CD8-positive, alpha-beta memory T cell (primary cell): ENCODE measurements at regions of chr17 and their contacts with region 1.

Region 1: GRCh38 chr17:40559954-40560591 is 5.2 kb downstream of the CCR7 start:
- DNase-seq: peak; percentile 75 to 85 (median 79)
- H3K4me3 ChIP-seq: peak overlapping the region; percentile 99
- H3K4me3 Mint-ChIP-seq: peak overlapping the region; percentile 88 to 91 (median 90)
- H3K27ac ChIP-seq: peak overlapping the region; percentile 96
- H3K27ac Mint-ChIP-seq: peak overlapping the region; percentile 92 to 100 (median 98)
- H3K4me1 ChIP-seq: peaks cover 96% of the 10 kb centered on the region
- H3K4me1 Mint-ChIP-seq: peaks cover 74 to 96% (median 94%) of the 10 kb centered on the region in 3 donors
- H3K27me3 ChIP-seq: no peaks in the 10 kb centered on the region
- H3K27me3 Mint-ChIP-seq: peaks cover 0 to 7% of the 10 kb centered on the region in 2 donors

Region 2: GRCh38 chr17:40362696-40363110 is 197.4 kb before region 1 on chr17:
- CTCF ChIA-PET with region 1: interaction called, 13 read pairs
- POLR2A ChIA-PET with region 1: interaction called, 4 read pairs
- DNase-seq: peak; percentile 52 to 79 (median 65)
- H3K4me3 ChIP-seq: no peak overlapping the region
- H3K4me3 Mint-ChIP-seq: peak overlapping the region; percentile 33 to 81 (median 59)
- H3K27ac ChIP-seq: no peak overlapping the region
- H3K27ac Mint-ChIP-seq: no peak overlapping the region
- H3K4me1 ChIP-seq: peaks cover 11% of the 10 kb centered on the region
- H3K4me1 Mint-ChIP-seq: peaks cover 9 to 22% (median 9%) of the 10 kb centered on the region in 3 donors
- H3K27me3 ChIP-seq: no peaks in the 10 kb centered on the region
- H3K27me3 Mint-ChIP-seq: peaks cover 7 to 17% of the 10 kb centered on the region in 2 donors

Region 3: GRCh38 chr17:40443583-40444327 is 116.3 kb before region 1 on chr17:
- CTCF ChIA-PET with region 1: interaction called, 13 read pairs
- POLR2A ChIA-PET with region 1: interaction called, 6 read pairs
- DNase-seq: peak; percentile 49 to 74 (median 54)
- H3K4me3 ChIP-seq: peak overlapping the region; percentile 64
- H3K4me3 Mint-ChIP-seq: peak overlapping the region; percentile 82 to 95 (median 85)
- H3K27ac ChIP-seq: peak overlapping the region; percentile 47
- H3K27ac Mint-ChIP-seq: peak overlapping the region; percentile 84 to 98 (median 92)
- H3K4me1 ChIP-seq: peaks cover 40% of the 10 kb centered on the region
- H3K4me1 Mint-ChIP-seq: peaks cover 36 to 44% (median 38%) of the 10 kb centered on the region in 3 donors
- H3K27me3 ChIP-seq: no peaks in the 10 kb centered on the region
- H3K27me3 Mint-ChIP-seq: peaks cover 0 to 11% of the 10 kb centered on the region in 2 donors

Region 4: DNA sequence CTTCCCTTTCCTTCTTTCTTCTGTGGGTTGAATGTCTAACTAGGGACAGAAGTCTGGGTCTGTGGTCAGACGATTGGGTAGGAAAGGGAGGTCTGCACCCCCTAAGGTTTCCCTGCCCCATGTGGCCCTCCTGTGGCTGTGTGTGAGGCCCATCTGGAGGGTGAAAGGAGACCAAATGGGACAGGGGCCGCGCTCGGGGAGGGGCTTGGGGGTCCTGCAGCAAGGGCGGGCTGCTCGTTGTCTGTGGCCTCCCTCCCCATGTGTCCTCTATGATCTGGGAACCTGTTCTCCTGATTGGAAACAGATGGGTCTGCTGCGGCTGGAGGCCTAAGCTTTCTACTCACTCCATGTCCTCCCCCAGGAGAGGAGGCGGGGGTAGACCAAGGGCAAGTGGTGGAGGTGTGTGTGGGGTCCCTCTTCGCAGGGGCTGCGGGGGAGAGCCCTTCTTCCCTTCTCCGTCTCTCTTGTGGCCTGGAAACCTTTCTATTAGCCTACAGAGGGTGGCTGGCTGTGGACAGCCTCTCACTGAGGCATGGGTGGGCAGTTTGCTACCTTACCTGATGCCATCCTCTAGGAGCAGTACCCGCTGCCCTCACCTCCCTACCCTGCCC is 98.2 kb before region 1 on chr17:
- CTCF ChIA-PET with region 1: no interaction called
- POLR2A ChIA-PET with region 1: no interaction called
- DNase-seq: no peak
- H3K4me3 ChIP-seq: no peak overlapping the region
- H3K4me3 Mint-ChIP-seq: no peak overlapping the region
- H3K27ac ChIP-seq: no peak overlapping the region
- H3K27ac Mint-ChIP-seq: peak overlapping the region in 1 of 8 donors; percentile 68
- H3K4me1 ChIP-seq: no peaks in the 10 kb centered on the region
- H3K4me1 Mint-ChIP-seq: peaks cover 0 to 2% (median 0%) of the 10 kb centered on the region in 3 donors
- H3K27me3 ChIP-seq: no peaks in the 10 kb centered on the region
- H3K27me3 Mint-ChIP-seq: peaks cover 0 to 2% of the 10 kb centered on the region in 2 donors

Region 5: DNA sequence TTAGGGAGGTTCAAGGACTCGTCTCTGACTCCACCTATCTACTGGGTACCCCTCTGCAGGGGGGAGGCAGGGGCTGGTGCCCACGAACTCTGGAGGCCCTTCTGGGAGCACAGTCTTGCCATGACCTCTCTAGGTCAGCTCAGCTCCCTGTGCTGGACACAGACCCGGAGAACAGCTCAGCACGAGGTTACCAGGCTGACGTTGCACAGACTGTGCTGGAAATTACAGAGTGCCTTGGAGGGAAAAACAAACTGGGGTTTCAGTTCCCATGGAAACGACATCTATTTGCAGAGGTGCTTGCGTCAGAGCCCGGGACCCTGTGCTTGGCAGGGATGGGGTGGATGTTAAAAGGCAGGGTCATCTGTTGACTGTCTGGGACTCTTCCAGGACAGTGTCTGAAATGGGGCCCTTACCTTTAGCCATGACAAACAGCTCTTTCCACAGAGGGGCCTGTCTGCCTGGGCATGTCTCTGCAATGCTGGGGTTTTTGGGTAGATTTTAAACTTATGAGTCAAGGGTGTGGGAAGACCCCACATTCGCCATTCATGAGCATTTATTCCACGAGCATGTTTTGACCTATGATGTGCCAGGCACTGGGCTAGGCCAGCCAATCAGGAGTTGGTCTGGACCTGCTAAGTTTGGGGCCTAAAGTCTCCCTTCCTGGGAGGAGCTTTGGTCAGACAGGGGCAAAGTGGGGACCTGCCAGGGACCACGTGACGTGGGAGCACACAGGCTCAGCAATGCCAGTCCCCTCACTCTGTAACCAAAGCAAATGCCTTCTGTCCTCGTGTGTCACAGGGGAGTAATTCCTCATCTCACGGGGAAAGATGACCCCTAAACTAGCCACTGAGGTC is 17.3 kb before region 1 on chr17:
- CTCF ChIA-PET with region 1: interaction called, 475 read pairs
- POLR2A ChIA-PET with region 1: interaction called, 27 read pairs
- DNase-seq: peak in 3 of 5 donors; percentile 33 to 64 (median 44)
- H3K4me3 ChIP-seq: peak overlapping the region; percentile 54
- H3K4me3 Mint-ChIP-seq: peak overlapping the region; percentile 77 to 86 (median 84)
- H3K27ac ChIP-seq: peak overlapping the region; percentile 72
- H3K27ac Mint-ChIP-seq: peak overlapping the region; percentile 95 to 100 (median 98)
- H3K4me1 ChIP-seq: peaks cover 92% of the 10 kb centered on the region
- H3K4me1 Mint-ChIP-seq: peaks cover 82 to 93% (median 89%) of the 10 kb centered on the region in 3 donors
- H3K27me3 ChIP-seq: no peaks in the 10 kb centered on the region
- H3K27me3 Mint-ChIP-seq: peaks cover 0 to 10% of the 10 kb centered on the region in 2 donors

Region 6: GRCh38 chr17:40602775-40603551 is 42.9 kb after region 1 on chr17:
- CTCF ChIA-PET with region 1: interaction called, 42 read pairs
- POLR2A ChIA-PET with region 1: interaction called, 6 read pairs
- DNase-seq: peak in 3 of 5 donors; percentile 65 to 91 (median 68)
- H3K4me3 ChIP-seq: peak overlapping the region; percentile 39
- H3K4me3 Mint-ChIP-seq: peak overlapping the region; percentile 7 to 83 (median 73)
- H3K27ac ChIP-seq: peak overlapping the region; percentile 41
- H3K27ac Mint-ChIP-seq: peak overlapping the region; percentile 96 to 100 (median 97)
- H3K4me1 ChIP-seq: peaks cover 100% of the 10 kb centered on the region
- H3K4me1 Mint-ChIP-seq: peaks cover 84 to 99% (median 99%) of the 10 kb centered on the region in 3 donors
- H3K27me3 ChIP-seq: no peaks in the 10 kb centered on the region
- H3K27me3 Mint-ChIP-seq: peaks cover 0 to 4% of the 10 kb centered on the region in 2 donors

Region 7: DNA sequence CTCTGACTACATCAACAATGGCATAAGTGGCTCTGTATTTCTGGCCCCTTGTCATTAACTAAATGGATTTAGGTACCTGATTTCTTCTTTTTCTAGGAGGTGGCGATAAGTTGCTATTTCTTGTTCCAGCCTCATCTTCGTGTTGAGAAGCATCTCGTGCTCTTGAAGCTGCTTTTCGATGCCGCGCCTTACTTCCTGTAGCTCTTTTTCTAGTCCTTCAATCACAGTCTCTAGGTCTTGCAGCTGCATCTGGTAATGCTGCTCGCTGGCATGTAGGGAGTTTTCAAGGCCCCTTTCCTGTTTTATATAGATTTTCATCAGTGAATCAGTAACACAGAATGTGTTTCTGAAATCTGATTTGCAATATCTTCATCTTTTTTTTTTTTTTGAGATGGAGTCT is 99.8 kb after region 1 on chr17:
- CTCF ChIA-PET with region 1: no interaction called
- POLR2A ChIA-PET with region 1: no interaction called
- DNase-seq: no peak
- H3K4me3 ChIP-seq: no peak overlapping the region
- H3K4me3 Mint-ChIP-seq: no peak overlapping the region
- H3K27ac ChIP-seq: no peak overlapping the region
- H3K27ac Mint-ChIP-seq: no peak overlapping the region
- H3K4me1 ChIP-seq: peaks cover 7% of the 10 kb centered on the region
- H3K4me1 Mint-ChIP-seq: peaks cover 0 to 7% (median 6%) of the 10 kb centered on the region in 3 donors
- H3K27me3 ChIP-seq: peaks cover 1% of the 10 kb centered on the region
- H3K27me3 Mint-ChIP-seq: peaks cover 17 to 36% of the 10 kb centered on the region in 2 donors